PC-9 (cell line): ENCODE measurements at regions of chr9 and their contacts with region 1.

Region 1: GRCh38 chr9:94821098-94821887 is 94.8 kb downstream of the AOPEP start:
- DNase-seq: no peak
- H3K4me3 ChIP-seq: no peak overlapping the region
- H3K27ac ChIP-seq: peak overlapping the region; percentile 96; the same call in 1 of the 2 replicates
- H3K4me1 ChIP-seq: peaks cover 64% of the 10 kb centered on the region
- H3K27me3 ChIP-seq: no peaks in the 10 kb centered on the region
- CTCF ChIP-seq: no peak

Region 2: DNA sequence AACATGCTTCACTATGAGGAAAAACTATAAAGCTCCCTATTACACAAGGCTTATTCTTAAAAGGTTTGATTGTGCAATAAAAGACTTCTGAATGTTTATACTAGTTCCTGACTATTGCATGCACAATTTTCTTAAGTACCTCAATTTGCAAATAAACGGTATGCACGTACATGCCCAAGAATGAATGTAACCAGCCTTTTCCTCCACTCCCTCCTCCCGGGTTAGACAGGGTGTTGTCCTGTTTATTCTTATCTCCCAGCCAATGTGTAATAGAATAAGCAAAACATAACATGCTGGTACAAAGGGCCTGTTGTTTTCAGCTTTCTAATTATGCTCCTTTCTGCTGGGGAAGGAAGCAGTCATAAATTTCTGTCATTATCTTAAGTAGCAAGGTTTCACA is 15.7 kb before region 1 on chr9:
- CTCF ChIA-PET with region 1: no interaction called
- POLR2A ChIA-PET with region 1: interaction called, 13 read pairs
- intact Hi-C with region 1: no loop called
- DNase-seq: peak; percentile 69 to 100
- H3K4me3 ChIP-seq: peak overlapping the region; percentile 0; the same call in 1 of the 2 replicates
- H3K27ac ChIP-seq: peak overlapping the region; percentile 94
- H3K4me1 ChIP-seq: peaks cover 54% of the 10 kb centered on the region
- H3K27me3 ChIP-seq: no peaks in the 10 kb centered on the region
- CTCF ChIP-seq: no peak

Region 3: GRCh38 chr9:94900222-94901018 is 79.1 kb after region 1 on chr9:
- CTCF ChIA-PET with region 1: no interaction called
- POLR2A ChIA-PET with region 1: interaction called, 13 read pairs
- intact Hi-C with region 1: no loop called
- DNase-seq: peak in 1 of 2 experiments; percentile 85
- H3K4me3 ChIP-seq: no peak overlapping the region; the same call in 1 of the 2 replicates
- H3K27ac ChIP-seq: peak overlapping the region; percentile 83
- H3K4me1 ChIP-seq: peaks cover 55% of the 10 kb centered on the region
- H3K27me3 ChIP-seq: no peaks in the 10 kb centered on the region
- CTCF ChIP-seq: no peak

Region 4: DNA sequence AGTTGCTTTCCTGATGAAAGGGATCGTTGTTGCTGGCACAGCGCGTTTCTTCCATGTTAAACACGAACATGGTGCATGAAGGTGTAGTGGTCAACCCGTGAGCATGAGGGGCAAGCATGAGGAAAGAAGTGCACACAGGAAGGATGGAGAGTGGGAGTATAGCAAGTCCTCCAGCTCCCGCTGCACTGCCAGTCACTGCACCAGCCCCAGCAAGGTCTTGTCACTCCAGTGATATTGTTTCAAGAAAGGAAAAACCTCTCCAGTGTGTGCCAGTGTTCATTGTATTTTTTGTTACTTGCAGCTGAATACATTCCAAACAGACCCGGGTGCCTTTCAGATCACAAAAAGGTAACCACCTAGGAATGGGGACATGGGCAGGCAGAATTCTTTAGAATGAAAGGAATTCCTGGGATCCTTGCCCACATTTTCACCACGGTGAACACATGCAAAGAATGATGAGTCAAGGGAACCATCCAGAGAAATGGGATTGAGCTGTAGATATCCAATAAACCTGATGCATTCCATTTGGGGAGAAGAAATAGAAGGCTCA is 91.5 kb after region 1 on chr9:
- CTCF ChIA-PET with region 1: no interaction called
- POLR2A ChIA-PET with region 1: interaction called, 14 read pairs
- intact Hi-C with region 1: loop called (anchors 1 kb)
- DNase-seq: peak; percentile 79 to 94
- H3K4me3 ChIP-seq: no peak overlapping the region
- H3K27ac ChIP-seq: peak overlapping the region; percentile 97
- H3K4me1 ChIP-seq: peaks cover 68% of the 10 kb centered on the region
- H3K27me3 ChIP-seq: no peaks in the 10 kb centered on the region
- CTCF ChIP-seq: no peak